ENCODE measurements at regions of chr3 and their contacts with region 1.

Region 1: DNA sequence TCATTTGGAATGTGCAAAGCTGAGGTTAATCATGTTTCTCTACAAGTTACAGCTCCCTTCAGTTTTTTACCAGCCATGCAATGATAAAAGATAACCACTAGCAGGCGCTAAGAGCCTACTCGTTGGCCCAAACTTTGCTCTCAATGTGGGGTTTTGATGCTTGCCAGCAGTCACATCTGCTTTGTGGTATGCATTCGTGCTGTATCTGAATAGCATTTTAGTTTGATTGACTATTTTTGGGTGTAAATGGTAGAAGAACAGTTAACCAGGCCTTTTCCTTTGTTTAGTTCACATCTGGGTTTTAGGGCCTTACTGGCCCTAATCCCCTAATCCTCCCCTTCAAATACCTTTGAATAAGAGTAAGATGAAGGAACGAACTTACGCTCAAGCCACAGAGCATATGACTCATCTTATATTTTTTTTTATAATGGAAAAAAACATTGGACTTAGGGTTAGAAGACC is 4.4 kb upstream of the CLDN11 start:
- DNase-seq: no peak
- ATAC-seq: peak; percentile 39 to 47

Region 2: DNA sequence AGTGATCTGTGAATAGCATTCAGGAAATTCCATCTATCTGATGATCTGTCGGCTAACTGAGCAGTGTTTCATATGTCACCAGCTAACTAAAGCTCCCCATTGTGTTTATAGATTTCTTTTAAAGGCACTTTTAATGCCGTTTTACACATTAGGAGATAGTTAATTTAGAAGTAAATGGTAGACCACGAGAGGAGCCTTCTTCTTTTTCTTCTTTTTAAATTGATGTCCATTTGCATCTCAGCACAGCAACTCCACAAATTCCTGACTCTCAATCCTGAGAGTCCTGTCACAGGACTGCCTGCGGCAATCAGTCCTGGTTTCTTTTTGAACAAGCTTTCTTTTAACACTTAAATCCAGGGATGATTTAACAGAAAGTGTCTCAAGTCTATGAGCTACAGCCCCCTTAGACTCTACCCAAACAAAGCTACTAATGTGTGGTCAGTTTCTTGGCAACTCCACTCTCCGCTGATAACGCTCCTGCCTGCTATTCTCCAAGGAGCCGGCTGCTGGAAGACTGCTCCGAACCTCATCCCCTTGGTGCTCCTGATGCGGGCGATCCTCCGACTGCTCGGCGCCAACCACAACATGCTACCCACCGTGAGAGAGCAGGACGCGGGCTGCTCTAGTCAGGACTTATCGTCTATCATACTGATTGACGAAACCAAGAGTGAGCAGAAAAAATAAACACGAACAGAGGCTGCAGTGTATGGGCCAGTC is 1172.1 kb before region 1 on chr3:
- intact Hi-C with region 1: no loop called
- DNase-seq: peak; percentile 68
- ATAC-seq: peak; percentile 70 to 96

Region 3: DNA sequence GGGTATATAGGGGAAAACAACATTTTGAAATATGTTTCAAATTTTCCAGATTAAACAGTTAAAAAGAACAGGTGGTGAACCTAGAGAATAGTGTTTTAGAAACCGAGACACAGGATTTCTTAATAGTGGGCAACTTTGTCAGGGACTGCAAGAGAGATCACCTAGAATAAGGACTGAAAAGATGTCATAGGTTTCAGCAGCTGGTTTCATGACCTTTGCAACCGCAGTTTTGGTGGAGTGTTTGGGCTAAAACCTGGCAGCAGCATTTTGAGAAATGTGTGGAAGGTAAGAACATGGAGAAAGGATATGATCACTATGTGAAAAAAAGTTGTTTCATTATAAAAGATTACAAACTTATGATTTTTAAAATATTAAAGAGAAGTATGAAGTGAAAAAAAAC is 157.1 kb before region 1 on chr3:
- intact Hi-C with region 1: no loop called
- DNase-seq: no peak
- ATAC-seq: no peak

Region 4: GRCh38 chr3:170277833-170278580 is 136.2 kb before region 1 on chr3:
- intact Hi-C with region 1: no loop called
- DNase-seq: no peak
- ATAC-seq: no peak

Region 5: GRCh38 chr3:170689893-170690660 is 275.8 kb after region 1 on chr3:
- intact Hi-C with region 1: loop called (anchors 2 to 10 kb)
- DNase-seq: peak; percentile 68
- ATAC-seq: peak in 1 of 2 donors; percentile 71

Region 6: GRCh38 chr3:170726976-170727661 is 312.9 kb after region 1 on chr3:
- intact Hi-C with region 1: no loop called
- DNase-seq: no peak
- ATAC-seq: peak in 1 of 2 donors; percentile 76

Measured in left cardiac atrium (tissue), 4 donors.